Activated CD8-positive, alpha-beta memory T cell treated with anti-CD3 and anti-CD28 coated beads, Interleukin-2, amount 10 ng/mL, durations not matched to agents 7 days and 5 days (primary cell): ENCODE measurements at regions of chr5 and their contacts with region 1.

Region 1: DNA sequence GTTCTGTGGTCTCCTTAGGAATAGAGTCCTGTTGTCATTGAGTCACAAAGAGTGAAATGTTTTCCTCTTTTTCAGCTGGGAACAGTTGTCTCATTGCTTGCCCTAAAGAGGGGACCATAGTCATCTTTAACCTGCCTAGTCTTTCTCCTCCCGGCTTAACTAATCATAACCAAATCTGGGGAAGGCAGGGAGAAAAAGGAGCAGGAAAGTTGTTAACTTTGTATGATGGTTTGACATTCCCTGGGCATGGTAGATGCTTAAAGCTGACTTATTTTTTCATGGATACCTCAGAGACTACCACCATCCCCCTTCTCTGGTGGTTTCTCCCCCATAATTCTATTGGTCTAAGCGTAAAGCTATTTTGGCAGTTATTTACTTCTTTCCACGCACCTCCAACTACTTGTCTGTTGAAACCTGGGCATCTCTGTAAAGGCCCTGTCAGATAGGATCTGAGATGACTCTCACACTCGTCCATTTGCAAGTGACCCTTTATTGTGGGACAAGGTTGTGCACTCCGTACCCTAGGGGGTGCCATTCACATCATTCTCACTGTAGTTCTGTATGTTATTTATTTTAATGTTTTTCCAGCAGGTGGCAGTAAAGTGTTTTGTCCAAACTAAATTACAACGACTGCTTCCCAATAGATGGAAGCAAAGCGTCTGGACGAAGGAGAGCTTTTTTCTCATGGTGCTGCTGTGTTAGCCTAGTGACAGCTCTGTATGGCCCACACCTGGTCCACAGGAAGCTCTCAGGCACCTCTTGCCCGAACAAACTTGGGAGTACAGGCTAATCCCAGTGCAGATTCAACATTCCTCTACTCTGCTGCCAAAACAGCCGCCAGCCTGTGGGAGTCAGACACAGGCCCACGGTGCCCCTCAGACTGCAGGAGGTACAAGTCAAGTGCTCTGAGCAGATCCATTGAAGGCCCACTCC is 3.0 kb upstream of the FAM13B start:
- DNase-seq: peak; percentile 81
- ATAC-seq: peak; percentile 51
- H3K4me3 Mint-ChIP-seq: no peak overlapping the region
- H3K27ac Mint-ChIP-seq: peak overlapping the region; percentile 18
- H3K4me1 Mint-ChIP-seq: peaks cover 32% of the 10 kb centered on the region
- H3K27me3 Mint-ChIP-seq: no peaks in the 10 kb centered on the region

Region 2: DNA sequence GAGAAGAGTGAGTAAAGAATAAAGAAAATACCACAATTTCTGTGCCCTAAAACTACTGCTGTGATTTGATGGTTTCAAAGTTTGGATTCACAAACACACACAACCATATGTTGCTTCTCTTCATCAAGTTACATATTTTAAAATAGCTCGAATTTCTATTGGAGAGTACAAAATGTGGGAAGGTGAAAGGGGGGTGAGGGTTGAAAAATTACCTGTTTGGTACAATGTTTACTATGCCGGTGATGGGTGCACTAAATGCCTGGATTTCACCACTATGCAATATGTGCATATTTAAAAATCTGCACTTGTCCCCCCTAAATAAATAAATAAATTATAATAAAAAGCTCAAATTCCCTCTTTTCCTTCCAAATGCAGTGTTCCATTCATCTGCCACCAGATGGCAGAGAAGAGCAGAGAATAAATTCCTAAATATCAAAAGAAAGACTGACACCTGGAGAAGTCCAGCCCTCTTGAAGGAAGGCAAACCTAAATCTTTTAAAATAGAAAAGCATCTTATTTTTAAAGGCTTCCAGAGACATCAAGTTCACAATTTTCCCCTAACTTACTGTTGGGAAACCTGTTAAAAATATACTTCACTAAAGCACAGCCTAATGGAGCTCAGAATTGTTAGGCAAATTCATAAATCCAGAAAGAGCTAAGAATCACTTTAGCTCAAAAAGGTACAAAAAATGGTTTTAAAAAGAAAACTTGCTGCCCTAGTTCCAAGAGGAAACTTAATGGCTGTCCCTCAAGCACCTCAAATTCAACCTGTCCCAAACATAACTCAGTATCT is 256.9 kb before region 1 on chr5:
- CTCF ChIA-PET with region 1: interaction called, 10 read pairs
- DNase-seq: no peak
- ATAC-seq: no peak
- H3K4me3 Mint-ChIP-seq: no peak overlapping the region
- H3K27ac Mint-ChIP-seq: no peak overlapping the region
- H3K4me1 Mint-ChIP-seq: no peaks in the 10 kb centered on the region
- H3K27me3 Mint-ChIP-seq: peaks cover 6% of the 10 kb centered on the region

Region 3: GRCh38 chr5:138077065-138077696 is 41.3 kb after region 1 on chr5:
- CTCF ChIA-PET with region 1: interaction called, 21 read pairs
- DNase-seq: peak; percentile 61
- ATAC-seq: no peak
- H3K4me3 Mint-ChIP-seq: no peak overlapping the region
- H3K27ac Mint-ChIP-seq: no peak overlapping the region
- H3K4me1 Mint-ChIP-seq: peaks cover 17% of the 10 kb centered on the region
- H3K27me3 Mint-ChIP-seq: peaks cover 11% of the 10 kb centered on the region

Region 4: DNA sequence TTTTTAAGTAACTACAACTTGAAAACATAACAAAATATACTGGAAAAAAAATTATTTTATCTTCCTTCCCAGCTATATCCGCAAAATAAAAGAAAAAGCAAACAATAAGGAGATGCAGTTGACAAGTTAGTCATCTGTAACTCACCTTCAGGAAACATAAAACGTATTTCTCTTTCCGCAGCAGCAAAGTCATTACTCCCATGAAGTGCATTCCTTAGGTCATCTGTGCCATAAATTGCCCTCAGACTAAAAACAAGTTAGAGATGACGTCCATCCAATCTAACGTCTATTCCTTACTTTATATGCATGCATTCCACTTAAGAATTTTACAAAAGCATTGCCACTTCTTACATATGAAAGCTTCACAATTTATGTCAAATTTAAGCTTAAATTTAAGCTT is 92.5 kb after region 1 on chr5:
- CTCF ChIA-PET with region 1: interaction called, 47 read pairs
- DNase-seq: no peak
- ATAC-seq: no peak
- H3K4me3 Mint-ChIP-seq: no peak overlapping the region
- H3K27ac Mint-ChIP-seq: no peak overlapping the region
- H3K4me1 Mint-ChIP-seq: peaks cover 2% of the 10 kb centered on the region
- H3K27me3 Mint-ChIP-seq: peaks cover 33% of the 10 kb centered on the region

Region 5: DNA sequence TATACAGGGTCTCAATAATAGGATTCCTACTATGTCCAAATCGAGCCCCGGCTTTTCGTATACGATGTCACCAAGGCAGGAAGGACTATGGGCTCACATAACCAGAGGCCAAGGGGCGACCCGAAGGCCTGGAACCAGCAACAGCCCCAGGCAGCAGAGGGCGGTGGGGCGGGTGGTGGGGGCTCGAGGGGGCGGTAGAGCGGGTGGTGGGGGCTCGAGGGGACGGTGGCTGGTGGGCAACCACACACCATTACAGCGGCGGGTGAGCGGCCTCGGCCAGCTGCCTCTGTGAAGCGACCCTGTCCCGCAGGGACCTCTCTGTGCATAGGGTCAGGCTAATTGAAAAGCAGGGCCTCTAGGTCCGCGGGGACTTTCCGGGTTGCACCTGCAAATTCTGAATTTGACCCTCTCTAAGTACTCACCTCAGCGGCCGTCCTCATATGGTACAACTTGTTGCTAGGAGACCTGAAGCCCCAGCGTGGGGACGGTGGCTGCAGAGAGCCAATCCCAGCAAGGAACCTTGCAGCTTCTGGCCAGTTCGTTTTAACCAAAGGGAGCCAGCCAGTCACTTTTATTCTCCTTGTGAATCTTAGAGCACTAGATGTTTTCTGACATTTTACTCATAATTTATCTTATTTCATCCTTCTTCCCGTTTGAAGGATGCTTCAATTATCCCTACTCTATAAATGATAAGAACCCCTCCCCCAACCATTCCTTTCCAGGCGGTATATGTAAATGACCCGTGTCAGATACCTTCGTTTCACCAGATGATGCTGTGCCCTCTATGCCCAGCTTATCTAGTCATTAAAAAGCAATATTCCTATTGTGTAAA is 103.3 kb after region 1 on chr5 and contains the start of gene NME5:
- CTCF ChIA-PET with region 1: interaction called, 47 read pairs
- DNase-seq: no peak
- ATAC-seq: no peak
- H3K4me3 Mint-ChIP-seq: no peak within 1 kb of the TSS
- H3K27ac Mint-ChIP-seq: no peak within 1 kb of the TSS
- H3K4me1 Mint-ChIP-seq: peaks cover 1% of the 10 kb centered on the region
- H3K27me3 Mint-ChIP-seq: peaks cover 21% of the 10 kb centered on the region
- total RNA-seq, gene NME5: not detected